B cell (primary cell): ENCODE measurements at regions of chr20 and their contacts with region 1.

Region 1: GRCh38 chr20:40962730-40963504 is 65.7 kb upstream of the TOP1 start:
- DNase-seq: peak; percentile 80
- ATAC-seq: peak; percentile 70
- H3K4me3 ChIP-seq: no peak overlapping the region
- H3K4me3 Mint-ChIP-seq: no peak overlapping the region
- H3K27ac ChIP-seq: no peak overlapping the region
- H3K27ac Mint-ChIP-seq: no peak overlapping the region
- H3K4me1 ChIP-seq: peaks cover 0 to 5% of the 10 kb centered on the region in 2 donors
- H3K4me1 Mint-ChIP-seq: peaks cover 3% of the 10 kb centered on the region
- H3K27me3 ChIP-seq: peaks cover 0 to 4% (median 0%) of the 10 kb centered on the region in 4 experiments
- H3K27me3 Mint-ChIP-seq: peaks cover 3% of the 10 kb centered on the region
- CTCF ChIP-seq: peak; percentile 90

Region 2: GRCh38 chr20:40741507-40742106 is 221.3 kb before region 1 on chr20:
- CTCF ChIA-PET with region 1: interaction called, 35 read pairs
- POLR2A ChIA-PET with region 1: no interaction called
- intact Hi-C with region 1: no loop called
- DNase-seq: peak; percentile 37
- ATAC-seq: no peak
- H3K4me3 ChIP-seq: no peak overlapping the region
- H3K4me3 Mint-ChIP-seq: no peak overlapping the region
- H3K27ac ChIP-seq: no peak overlapping the region
- H3K27ac Mint-ChIP-seq: no peak overlapping the region
- H3K4me1 ChIP-seq: peaks cover 16% of the 10 kb centered on the region in 2 donors
- H3K4me1 Mint-ChIP-seq: peaks cover 16% of the 10 kb centered on the region
- H3K27me3 ChIP-seq: peaks cover 0 to 16% (median 0%) of the 10 kb centered on the region in 4 experiments
- H3K27me3 Mint-ChIP-seq: peaks cover 18% of the 10 kb centered on the region
- CTCF ChIP-seq: peak; percentile 50

Region 3: DNA sequence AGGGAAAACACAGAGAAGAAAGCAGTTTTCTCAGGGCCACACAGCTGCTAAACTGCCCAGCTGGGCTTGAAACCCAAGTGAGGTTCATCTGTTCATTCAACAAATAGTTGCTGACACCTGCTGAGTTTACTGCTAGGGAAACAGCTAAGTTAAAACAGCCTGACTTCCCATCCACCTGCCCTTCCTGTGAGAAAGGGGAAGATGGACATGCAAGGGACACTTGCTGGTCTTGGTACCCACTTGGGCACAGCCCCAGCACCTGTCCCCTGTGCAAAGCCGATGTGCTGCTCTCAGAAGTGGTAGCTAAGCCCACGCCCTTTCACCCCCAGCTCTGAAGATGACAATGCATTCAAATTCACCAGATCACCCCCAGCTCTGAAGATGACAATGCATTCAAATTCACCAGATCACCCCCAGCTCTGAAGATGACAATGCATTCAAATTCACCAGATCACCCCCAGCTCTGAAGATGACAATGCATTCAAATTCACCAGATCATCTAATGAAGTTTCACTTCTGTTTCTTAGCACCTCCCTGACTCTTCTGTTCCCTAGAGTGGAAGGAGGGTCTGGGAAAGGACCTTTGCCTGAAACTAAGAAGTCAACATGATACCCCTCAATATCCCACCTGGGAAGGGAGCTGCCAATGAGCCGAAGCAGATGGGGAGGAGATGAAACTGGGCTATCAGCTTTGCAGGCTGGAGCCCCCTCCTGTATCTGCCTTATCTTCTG is 19.7 kb after region 1 on chr20:
- CTCF ChIA-PET with region 1: interaction called, 45 read pairs
- POLR2A ChIA-PET with region 1: interaction called, 15 read pairs
- intact Hi-C with region 1: no loop called
- DNase-seq: no peak
- ATAC-seq: no peak
- H3K4me3 ChIP-seq: no peak overlapping the region
- H3K4me3 Mint-ChIP-seq: no peak overlapping the region
- H3K27ac ChIP-seq: no peak overlapping the region
- H3K27ac Mint-ChIP-seq: no peak overlapping the region
- H3K4me1 ChIP-seq: peaks cover 20% of the 10 kb centered on the region in 2 donors
- H3K4me1 Mint-ChIP-seq: peaks cover 15% of the 10 kb centered on the region
- H3K27me3 ChIP-seq: no peaks in the 10 kb centered on the region
- H3K27me3 Mint-ChIP-seq: no peaks in the 10 kb centered on the region
- CTCF ChIP-seq: no peak

Region 4: GRCh38 chr20:41095110-41095969 is 132.4 kb after region 1 on chr20:
- CTCF ChIA-PET with region 1: interaction called, 204 read pairs
- POLR2A ChIA-PET with region 1: no interaction called
- intact Hi-C with region 1: loop called (anchors 1 kb)
- DNase-seq: peak; percentile 76
- ATAC-seq: peak; percentile 74
- H3K4me3 ChIP-seq: no peak overlapping the region
- H3K4me3 Mint-ChIP-seq: no peak overlapping the region
- H3K27ac ChIP-seq: no peak overlapping the region
- H3K27ac Mint-ChIP-seq: no peak overlapping the region
- H3K4me1 ChIP-seq: no peaks in the 10 kb centered on the region
- H3K4me1 Mint-ChIP-seq: no peaks in the 10 kb centered on the region
- H3K27me3 ChIP-seq: no peaks in the 10 kb centered on the region
- H3K27me3 Mint-ChIP-seq: no peaks in the 10 kb centered on the region
- CTCF ChIP-seq: peak; percentile 96

Region 5: DNA sequence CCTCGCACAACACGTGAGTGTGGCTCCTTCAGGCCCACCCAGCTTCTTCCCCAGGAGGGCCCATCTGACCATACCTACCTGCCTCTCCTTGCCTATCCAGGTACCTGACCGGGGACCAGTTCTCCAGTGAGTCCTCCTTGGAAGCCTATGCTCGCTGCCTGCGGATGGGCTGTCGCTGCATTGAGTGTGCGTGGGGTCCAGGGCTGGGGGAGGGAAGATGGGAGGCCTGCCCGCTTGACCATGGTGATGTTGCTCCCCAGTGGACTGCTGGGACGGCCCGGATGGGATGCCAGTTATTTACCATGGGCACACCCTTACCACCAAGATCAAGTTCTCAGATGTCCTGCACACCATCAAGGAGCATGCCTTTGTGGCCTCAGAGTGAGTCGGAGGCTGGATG is 200.9 kb after region 1 on chr20:
- CTCF ChIA-PET with region 1: no interaction called
- POLR2A ChIA-PET with region 1: no interaction called
- intact Hi-C with region 1: no loop called
- DNase-seq: no peak
- ATAC-seq: no peak
- H3K4me3 ChIP-seq: no peak overlapping the region
- H3K4me3 Mint-ChIP-seq: no peak overlapping the region
- H3K27ac ChIP-seq: no peak overlapping the region
- H3K27ac Mint-ChIP-seq: no peak overlapping the region
- H3K4me1 ChIP-seq: peaks cover 6 to 24% of the 10 kb centered on the region in 2 donors
- H3K4me1 Mint-ChIP-seq: peaks cover 21% of the 10 kb centered on the region
- H3K27me3 ChIP-seq: peaks cover 0 to 9% (median under 1%) of the 10 kb centered on the region in 4 experiments
- H3K27me3 Mint-ChIP-seq: no peaks in the 10 kb centered on the region
- CTCF ChIP-seq: no peak